K562 (cell line): ENCODE measurements at regions of chrX and their contacts with region 1.

Region 1: DNA sequence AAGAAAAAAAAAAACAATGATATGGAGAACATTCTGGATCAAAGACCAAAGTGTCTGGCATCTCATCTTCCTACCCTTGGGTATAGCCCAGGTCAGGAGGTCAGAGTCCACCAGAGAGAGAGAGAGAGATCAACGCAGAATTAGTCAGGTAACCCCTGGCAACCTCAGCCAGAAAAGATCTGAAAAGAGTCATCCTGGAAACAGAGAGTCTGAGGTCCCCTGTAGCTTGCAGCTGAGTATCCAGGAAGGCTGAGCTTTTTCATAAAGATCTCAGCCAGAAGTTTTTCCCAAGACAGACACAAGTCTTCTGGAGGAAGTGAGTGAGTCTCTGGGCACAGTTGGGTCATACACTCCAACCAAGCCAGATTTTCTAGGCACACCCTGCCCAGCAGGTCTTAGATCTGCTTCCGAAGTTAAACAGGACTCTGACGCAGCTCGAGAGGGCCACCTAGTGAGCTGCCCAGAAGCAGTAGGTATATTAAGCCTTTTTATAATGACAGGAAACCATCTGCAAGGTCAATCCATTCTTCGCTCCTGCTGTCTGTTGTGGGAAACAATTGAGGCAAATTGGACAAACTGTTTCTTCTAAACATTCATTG is 35.7 kb downstream of the ACE2 start:
- DNase-seq: peak; percentile 23 to 78 (median 34)
- ATAC-seq: peak; percentile 96
- H3K4me3 ChIP-seq: no peak overlapping the region
- H3K27ac ChIP-seq: no peak overlapping the region
- H3K4me1 ChIP-seq: peaks cover 0 to 3% of the 10 kb centered on the region in 2 experiments; a peak in 2 of 5 replicates
- H3K27me3 ChIP-seq: no peaks in the 10 kb centered on the region
- CTCF ChIP-seq: peak; percentile 84 to 89 (median 86)
- EP300 ChIP-seq: no peak
- POLR2A ChIP-seq: no peak
- RAD21 ChIP-seq: peak; percentile 94 to 97

Region 2: GRCh38 chrX:15349046-15349445 is 216.0 kb before region 1 on chrX:
- CTCF ChIA-PET with region 1: no interaction called
- POLR2A ChIA-PET with region 1: no interaction called
- in situ Hi-C with region 1: loop called (anchors 10 kb)
- intact Hi-C with region 1: loop called (anchors 1 kb)
- DNase-seq: peak; percentile 13 to 69 (median 22)
- ATAC-seq: peak; percentile 92
- H3K4me3 ChIP-seq: no peak overlapping the region
- H3K27ac ChIP-seq: no peak overlapping the region
- H3K4me1 ChIP-seq: no peaks in the 10 kb centered on the region
- H3K27me3 ChIP-seq: peaks cover 0 to 2% of the 10 kb centered on the region in 2 experiments; a peak in 2 of 5 replicates
- CTCF ChIP-seq: peak; percentile 50 to 70 (median 57)
- EP300 ChIP-seq: no peak
- POLR2A ChIP-seq: no peak
- RAD21 ChIP-seq: peak; percentile 65 to 78

Region 3: DNA sequence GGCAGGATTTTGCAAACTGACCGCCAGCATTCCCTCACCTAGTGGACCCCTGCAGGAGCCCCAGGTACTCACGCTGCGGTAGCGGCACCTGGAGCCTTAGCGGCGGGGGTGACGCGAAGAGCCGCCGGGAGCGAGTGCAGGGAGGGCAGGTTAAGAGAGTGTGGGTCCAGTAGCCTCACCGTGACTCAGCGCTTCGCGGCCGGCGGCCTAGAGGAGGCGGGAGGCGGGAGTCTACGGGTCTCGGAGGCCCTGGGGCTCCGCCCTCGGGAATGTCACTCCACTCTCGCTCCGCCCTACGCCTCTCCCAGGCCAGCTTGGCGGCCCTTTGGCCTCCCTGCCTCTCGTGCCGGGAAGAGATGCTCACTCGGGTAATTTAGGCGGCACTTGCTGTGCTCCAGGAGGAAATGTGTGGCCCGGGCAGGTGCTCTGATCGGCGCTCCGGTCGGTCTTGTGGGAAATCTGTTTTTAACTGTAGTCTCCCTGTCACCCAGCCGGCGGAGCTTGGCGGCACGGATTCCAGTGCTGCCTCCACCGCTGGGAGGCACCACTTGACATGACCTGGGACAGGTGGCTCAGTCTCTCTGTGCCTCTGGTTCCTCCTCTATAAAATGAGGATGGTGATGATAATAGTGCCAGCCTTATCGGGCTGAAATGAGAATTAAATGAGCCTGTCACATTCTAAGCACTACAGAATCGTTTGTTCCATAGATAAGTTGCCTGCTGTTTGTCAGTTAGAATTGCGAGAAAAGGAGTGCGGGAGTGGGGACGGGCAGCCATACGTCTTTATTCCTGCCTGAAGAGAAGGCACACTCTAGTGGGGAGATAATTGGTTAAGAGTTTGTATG is 71.7 kb before region 1 on chrX and contains the start of gene PIR:
- CTCF ChIA-PET with region 1: interaction called, 8 read pairs
- POLR2A ChIA-PET with region 1: interaction called, 4 read pairs
- in situ Hi-C with region 1: no loop called
- intact Hi-C with region 1: loop called (anchors 1 kb)
- DNase-seq: peak; percentile 88 to 95 (median 90)
- ATAC-seq: peak; percentile 99
- H3K4me3 ChIP-seq: peak within 1 kb of the TSS; percentile 44
- H3K27ac ChIP-seq: peak within 1 kb of the TSS; percentile 77
- H3K4me1 ChIP-seq: peaks cover 10 to 20% of the 10 kb centered on the region in 2 experiments; a peak in 3 of 5 replicates
- H3K27me3 ChIP-seq: no peaks in the 10 kb centered on the region
- CTCF ChIP-seq: peak; percentile 60 to 82 (median 71)
- EP300 ChIP-seq: peak; percentile 51
- POLR2A ChIP-seq: peak; percentile 64
- RAD21 ChIP-seq: peak; percentile 35 to 43; a peak in 3 of 4 replicates
- polyA plus RNA-seq, gene PIR: 25.1 to 27.3 TPM

Region 4: DNA sequence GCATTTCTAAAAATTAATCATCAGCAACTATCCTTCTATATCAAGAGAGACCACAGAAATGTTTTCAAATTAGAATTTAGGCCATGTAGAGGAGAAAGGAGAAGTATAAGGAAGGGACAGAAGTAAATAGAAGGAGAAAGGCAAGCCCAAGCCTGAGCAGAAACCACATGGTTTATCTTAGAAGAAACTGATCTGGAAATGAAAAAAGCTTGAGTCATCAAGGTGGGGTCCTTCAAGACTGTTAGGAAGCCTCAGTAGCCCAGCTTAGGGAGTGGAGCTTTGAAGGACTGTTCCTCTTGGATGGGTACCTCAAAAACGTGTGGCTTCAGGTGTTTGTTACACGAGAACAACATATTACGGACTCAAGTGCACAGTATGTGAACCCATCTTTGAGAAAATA is 60.0 kb before region 1 on chrX:
- CTCF ChIA-PET with region 1: no interaction called
- POLR2A ChIA-PET with region 1: no interaction called
- in situ Hi-C with region 1: loop called (anchors 5 kb)
- intact Hi-C with region 1: no loop called
- DNase-seq: peak in 2 of 4 experiments; percentile 48 to 58
- ATAC-seq: peak; percentile 89
- H3K4me3 ChIP-seq: no peak overlapping the region
- H3K27ac ChIP-seq: peak overlapping the region; percentile 75
- H3K4me1 ChIP-seq: peaks cover 0 to 20% of the 10 kb centered on the region in 2 experiments; a peak in 4 of 5 replicates
- H3K27me3 ChIP-seq: no peaks in the 10 kb centered on the region
- CTCF ChIP-seq: no peak
- EP300 ChIP-seq: no peak
- POLR2A ChIP-seq: no peak
- RAD21 ChIP-seq: no peak

Region 5: GRCh38 chrX:15645258-15645657 is 80.2 kb after region 1 on chrX:
- CTCF ChIA-PET with region 1: no interaction called
- POLR2A ChIA-PET with region 1: no interaction called
- in situ Hi-C with region 1: loop called (anchors 10 kb)
- intact Hi-C with region 1: loop called (anchors 2 kb)
- DNase-seq: peak in 1 of 4 experiments; percentile 8
- ATAC-seq: no peak; the same call in 2 of the 3 replicates
- H3K4me3 ChIP-seq: no peak overlapping the region
- H3K27ac ChIP-seq: no peak overlapping the region
- H3K4me1 ChIP-seq: no peaks in the 10 kb centered on the region
- H3K27me3 ChIP-seq: no peaks in the 10 kb centered on the region; a peak in 1 of 5 replicates
- CTCF ChIP-seq: 0 out of 6 replicates have a peak, but pooled peaks of 1 of the 3 experiments have one; percentile 21
- EP300 ChIP-seq: no peak
- POLR2A ChIP-seq: no peak
- RAD21 ChIP-seq: peak in 1 of 2 experiments; percentile 37; a peak in 2 of 4 replicates

Region 6: DNA sequence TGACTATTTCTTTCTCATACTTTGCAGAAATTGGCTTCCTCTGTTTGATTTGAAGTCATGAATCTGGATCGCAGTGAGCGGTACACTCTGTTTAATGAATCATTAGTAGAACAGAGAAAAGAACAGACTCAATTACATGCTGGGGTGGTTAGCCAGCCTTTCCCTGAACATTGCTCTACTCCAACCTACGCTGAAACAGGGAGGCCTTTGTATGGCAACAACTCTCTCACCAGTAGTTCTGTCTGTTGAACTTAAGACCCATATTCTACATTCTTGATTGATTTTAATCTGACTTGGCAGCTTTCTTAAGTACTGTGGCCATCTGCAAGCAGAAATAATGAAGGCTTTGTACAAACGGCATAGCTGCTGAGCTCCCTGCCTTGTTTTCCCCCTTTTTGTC is 308.5 kb after region 1 on chrX:
- CTCF ChIA-PET with region 1: no interaction called
- POLR2A ChIA-PET with region 1: no interaction called
- in situ Hi-C with region 1: no loop called
- intact Hi-C with region 1: no loop called
- DNase-seq: no peak
- ATAC-seq: no peak
- H3K4me3 ChIP-seq: no peak overlapping the region
- H3K27ac ChIP-seq: no peak overlapping the region
- H3K4me1 ChIP-seq: no peaks in the 10 kb centered on the region
- H3K27me3 ChIP-seq: no peaks in the 10 kb centered on the region; a peak in 1 of 5 replicates
- CTCF ChIP-seq: no peak
- EP300 ChIP-seq: no peak
- POLR2A ChIP-seq: no peak
- RAD21 ChIP-seq: no peak

Region 7: GRCh38 chrX:15973299-15973698 is 408.2 kb after region 1 on chrX:
- CTCF ChIA-PET with region 1: no interaction called
- POLR2A ChIA-PET with region 1: no interaction called
- in situ Hi-C with region 1: no loop called
- intact Hi-C with region 1: loop called (anchors 5 kb)
- DNase-seq: peak; percentile 4 to 61 (median 28)
- ATAC-seq: peak; percentile 94
- H3K4me3 ChIP-seq: no peak overlapping the region
- H3K27ac ChIP-seq: no peak overlapping the region
- H3K4me1 ChIP-seq: peaks cover 0 to 19% of the 10 kb centered on the region in 2 experiments; a peak in 2 of 5 replicates
- H3K27me3 ChIP-seq: no peaks in the 10 kb centered on the region
- CTCF ChIP-seq: peak; percentile 69 to 94 (median 92)
- EP300 ChIP-seq: no peak
- POLR2A ChIP-seq: no peak
- RAD21 ChIP-seq: peak; percentile 93